ENCODE measurements at regions of chr5 and their contacts with region 1.

Region 1: DNA sequence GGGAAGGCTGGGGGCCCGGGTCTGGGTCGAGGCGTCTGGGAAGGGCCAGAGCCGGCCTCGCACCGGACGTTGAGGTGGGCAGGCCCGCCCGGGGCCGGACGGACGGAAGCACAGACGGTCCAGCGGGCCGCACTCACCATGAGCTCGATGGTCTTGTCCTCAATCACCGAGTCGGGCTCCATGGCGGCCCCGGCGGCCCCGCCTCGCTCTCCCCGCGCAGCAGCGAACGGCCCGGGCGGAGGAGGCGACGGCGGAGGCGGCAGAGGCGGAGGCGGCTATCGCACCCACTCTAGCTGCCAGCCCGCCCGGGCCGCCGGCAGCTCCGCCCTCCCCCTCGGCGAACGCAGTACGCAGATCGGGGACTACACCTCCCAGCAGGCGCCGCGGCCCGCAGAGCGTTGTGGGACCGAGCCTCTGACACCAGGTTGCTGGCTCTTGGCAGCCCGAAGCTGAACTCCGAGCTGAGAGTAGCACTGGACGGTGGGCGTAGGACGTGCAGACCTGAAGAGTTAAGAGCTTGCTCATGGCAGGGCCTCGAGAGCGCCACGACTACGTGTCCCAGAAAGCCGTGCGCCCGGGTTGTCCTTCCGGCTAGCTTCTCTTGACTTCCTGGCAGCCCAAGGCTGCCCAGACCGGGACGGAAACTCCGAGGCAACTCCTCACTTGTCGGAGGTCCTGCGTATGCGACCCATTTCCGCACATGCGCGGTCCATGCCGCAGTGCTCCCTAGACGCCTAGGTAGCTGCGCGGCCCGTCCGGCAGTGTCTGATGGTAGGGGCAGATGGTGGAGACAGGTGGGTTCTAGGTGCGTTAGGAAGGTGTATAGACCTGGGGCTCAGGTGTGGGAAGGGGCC is at the start of gene FBXW11:
- DNase-seq: peak; percentile 85 to 96 (median 92)
- ATAC-seq: peak; percentile 94
- H3K4me3 ChIP-seq: peak within 1 kb of the TSS; percentile 89
- H3K4me3 Mint-ChIP-seq: peak within 1 kb of the TSS; percentile 93 to 99 (median 97)
- H3K27ac ChIP-seq: peak within 1 kb of the TSS; percentile 91
- H3K27ac Mint-ChIP-seq: peak within 1 kb of the TSS; percentile 94 to 100 (median 98)
- H3K4me1 ChIP-seq: peaks cover 33 to 36% of the 10 kb centered on the region in 2 donors
- H3K4me1 Mint-ChIP-seq: peaks cover 34 to 67% (median 56%) of the 10 kb centered on the region in 7 donors
- H3K27me3 ChIP-seq: no peaks in the 10 kb centered on the region
- H3K27me3 Mint-ChIP-seq: no peaks in the 10 kb centered on the region
- total RNA-seq, gene FBXW11: 29.1 to 40.7 (median 33.6) TPM

Region 2: DNA sequence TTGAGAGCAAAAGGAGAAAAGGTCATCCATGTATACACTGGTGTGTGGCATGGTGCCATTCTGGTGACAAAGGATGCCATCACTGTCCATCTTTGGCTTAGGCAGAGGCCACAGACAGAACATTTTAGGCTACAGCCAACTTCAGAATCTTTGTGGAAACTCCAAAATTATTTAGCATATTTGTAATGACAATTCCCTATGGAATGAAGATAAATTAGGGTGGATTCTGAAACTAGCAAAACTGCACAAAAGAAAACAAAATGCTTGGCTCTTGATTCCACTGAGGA is 92.6 kb before region 1 on chr5:
- CTCF ChIA-PET with region 1: interaction called, 11 read pairs
- POLR2A ChIA-PET with region 1: interaction called, 5 read pairs
- intact Hi-C with region 1: loop called (anchors 1 to 2 kb)
- DNase-seq: no peak
- ATAC-seq: no peak
- H3K4me3 ChIP-seq: no peak overlapping the region
- H3K4me3 Mint-ChIP-seq: peak overlapping the region in 1 of 10 donors; percentile 2
- H3K27ac ChIP-seq: no peak overlapping the region
- H3K27ac Mint-ChIP-seq: peak overlapping the region; percentile 12 to 88 (median 73)
- H3K4me1 ChIP-seq: peaks cover 4 to 12% of the 10 kb centered on the region in 2 donors
- H3K4me1 Mint-ChIP-seq: peaks cover 25 to 59% (median 53%) of the 10 kb centered on the region in 7 donors
- H3K27me3 ChIP-seq: no peaks in the 10 kb centered on the region
- H3K27me3 Mint-ChIP-seq: no peaks in the 10 kb centered on the region

Region 3: DNA sequence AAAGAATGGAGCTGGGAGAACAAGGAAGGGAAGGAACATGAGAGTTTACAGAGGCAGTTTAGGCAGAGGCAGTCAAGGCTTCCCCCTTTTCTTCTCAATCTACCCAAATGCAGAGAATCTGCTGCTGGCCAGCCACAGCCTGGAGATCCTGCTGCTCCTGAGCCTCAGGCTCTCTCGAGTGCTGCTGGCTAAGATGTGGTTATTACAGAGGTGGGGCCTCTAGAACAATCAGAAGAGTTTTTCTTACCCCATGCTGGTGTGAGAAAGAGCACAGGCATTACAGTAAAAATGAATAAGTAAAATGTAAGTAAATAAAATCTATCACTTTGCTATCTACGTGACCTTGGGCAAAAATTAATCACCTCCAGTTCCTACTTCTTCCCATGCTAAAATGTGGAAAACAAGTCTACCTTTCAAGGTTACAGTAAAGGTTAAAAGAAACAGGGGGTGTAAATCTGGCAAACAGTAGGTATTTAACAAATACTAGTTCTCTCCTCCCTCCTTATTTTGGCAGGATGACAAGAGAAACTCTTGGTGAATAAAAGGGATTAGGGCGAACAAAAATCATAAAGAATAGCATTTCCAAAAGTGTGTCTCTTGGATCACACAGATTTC is 31.2 kb before region 1 on chr5:
- CTCF ChIA-PET with region 1: no interaction called
- POLR2A ChIA-PET with region 1: no interaction called
- intact Hi-C with region 1: no loop called
- DNase-seq: no peak
- ATAC-seq: no peak
- H3K4me3 ChIP-seq: no peak overlapping the region
- H3K4me3 Mint-ChIP-seq: peak overlapping the region in 6 of 10 donors; percentile 23 to 65 (median 44)
- H3K27ac ChIP-seq: no peak overlapping the region
- H3K27ac Mint-ChIP-seq: peak overlapping the region in 4 of 9 donors; percentile 8 to 71 (median 30)
- H3K4me1 ChIP-seq: peaks cover 0 to 11% of the 10 kb centered on the region in 2 donors
- H3K4me1 Mint-ChIP-seq: peaks cover 24 to 71% (median 67%) of the 10 kb centered on the region in 7 donors
- H3K27me3 ChIP-seq: no peaks in the 10 kb centered on the region
- H3K27me3 Mint-ChIP-seq: no peaks in the 10 kb centered on the region

Region 4: GRCh38 chr5:172044631-172045314 is 38.2 kb after region 1 on chr5:
- CTCF ChIA-PET with region 1: interaction called, 7 read pairs
- POLR2A ChIA-PET with region 1: interaction called, 3 read pairs
- intact Hi-C with region 1: loop called (anchors 1 to 5 kb)
- DNase-seq: no peak
- ATAC-seq: no peak
- H3K4me3 ChIP-seq: no peak overlapping the region
- H3K4me3 Mint-ChIP-seq: no peak overlapping the region
- H3K27ac ChIP-seq: no peak overlapping the region
- H3K27ac Mint-ChIP-seq: peak overlapping the region in 7 of 9 donors; percentile 36 to 90 (median 55)
- H3K4me1 ChIP-seq: no peaks in the 10 kb centered on the region
- H3K4me1 Mint-ChIP-seq: peaks cover 7 to 22% (median 15%) of the 10 kb centered on the region in 7 donors
- H3K27me3 ChIP-seq: no peaks in the 10 kb centered on the region
- H3K27me3 Mint-ChIP-seq: no peaks in the 10 kb centered on the region

Region 5: GRCh38 chr5:172173831-172174153 is 167.2 kb after region 1 on chr5:
- CTCF ChIA-PET with region 1: interaction called, 5 read pairs
- POLR2A ChIA-PET with region 1: interaction called, 39 read pairs
- intact Hi-C with region 1: loop called (anchors 1 kb)
- DNase-seq: peak in 6 of 9 donors; percentile 19 to 79 (median 28)
- ATAC-seq: peak; percentile 32
- H3K4me3 ChIP-seq: peak overlapping the region; percentile 58
- H3K4me3 Mint-ChIP-seq: peak overlapping the region; percentile 87 to 99 (median 94)
- H3K27ac ChIP-seq: peak overlapping the region; percentile 92
- H3K27ac Mint-ChIP-seq: peak overlapping the region; percentile 94 to 100 (median 98)
- H3K4me1 ChIP-seq: peaks cover 77 to 83% of the 10 kb centered on the region in 2 donors
- H3K4me1 Mint-ChIP-seq: peaks cover 76 to 99% (median 93%) of the 10 kb centered on the region in 7 donors
- H3K27me3 ChIP-seq: no peaks in the 10 kb centered on the region
- H3K27me3 Mint-ChIP-seq: no peaks in the 10 kb centered on the region

Region 6: GRCh38 chr5:172347496-172348052 is 341.0 kb after region 1 on chr5:
- CTCF ChIA-PET with region 1: no interaction called
- POLR2A ChIA-PET with region 1: no interaction called
- intact Hi-C with region 1: no loop called
- DNase-seq: no peak
- ATAC-seq: no peak
- H3K4me3 ChIP-seq: no peak overlapping the region
- H3K4me3 Mint-ChIP-seq: no peak overlapping the region
- H3K27ac ChIP-seq: no peak overlapping the region
- H3K27ac Mint-ChIP-seq: no peak overlapping the region
- H3K4me1 ChIP-seq: no peaks in the 10 kb centered on the region
- H3K4me1 Mint-ChIP-seq: peaks cover 0 to 5% (median 0%) of the 10 kb centered on the region in 7 donors
- H3K27me3 ChIP-seq: no peaks in the 10 kb centered on the region
- H3K27me3 Mint-ChIP-seq: peaks cover 0 to 5% (median 0%) of the 10 kb centered on the region in 5 donors

Region 7: DNA sequence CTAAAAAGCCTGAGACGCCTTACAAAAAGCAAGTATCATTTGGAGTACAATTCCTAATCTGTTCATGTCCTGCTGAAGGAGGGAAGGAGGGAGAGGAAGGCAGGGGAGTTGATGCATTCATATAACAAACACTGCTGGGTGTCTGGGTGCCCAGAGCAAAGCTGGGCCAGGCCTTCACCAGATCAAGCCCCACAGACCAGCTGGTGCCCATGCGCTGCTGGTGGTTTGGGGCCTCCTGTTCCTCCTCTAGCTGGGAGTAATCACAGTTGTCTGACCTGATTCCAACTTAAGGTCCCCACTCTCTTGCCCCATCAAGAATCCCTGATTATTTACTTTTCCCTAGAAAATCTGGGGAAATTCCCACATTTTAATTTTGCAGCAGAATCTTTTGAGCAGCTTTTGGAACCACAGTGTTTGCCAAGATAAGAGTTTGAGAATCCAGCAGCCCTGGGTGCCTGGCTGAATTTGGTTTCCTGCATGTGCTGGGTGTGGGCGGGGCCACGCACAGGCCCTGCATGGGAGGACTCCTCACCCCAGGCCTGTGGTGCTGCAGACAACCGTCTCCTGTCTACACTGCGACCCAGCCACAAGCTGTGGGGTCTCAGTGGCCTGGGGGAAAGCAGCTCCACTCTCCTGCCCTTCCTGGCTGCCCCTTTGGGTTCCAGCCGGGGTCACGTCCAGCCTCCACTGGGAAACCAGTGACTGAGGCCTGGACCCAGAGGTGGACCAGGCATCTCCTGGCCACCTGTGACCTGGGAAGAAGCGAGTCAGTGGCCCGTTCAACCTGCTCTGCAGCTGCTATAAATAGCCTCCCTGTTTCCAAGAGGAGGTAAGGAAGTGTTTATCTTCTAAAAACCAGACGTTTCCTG is 682.0 kb after region 1 on chr5:
- CTCF ChIA-PET with region 1: no interaction called
- POLR2A ChIA-PET with region 1: no interaction called
- intact Hi-C with region 1: loop called in 1 of 2 experiments (anchors 10 kb)
- DNase-seq: peak in 8 of 9 donors; percentile 38 to 62 (median 48)
- ATAC-seq: peak; percentile 68
- H3K4me3 ChIP-seq: no peak overlapping the region
- H3K4me3 Mint-ChIP-seq: peak overlapping the region in 3 of 10 donors; percentile 3 to 41 (median 17)
- H3K27ac ChIP-seq: peak overlapping the region; percentile 64
- H3K27ac Mint-ChIP-seq: peak overlapping the region; percentile 73 to 91 (median 85)
- H3K4me1 ChIP-seq: peaks cover 0 to 14% of the 10 kb centered on the region in 2 donors
- H3K4me1 Mint-ChIP-seq: peaks cover 9 to 21% (median 16%) of the 10 kb centered on the region in 7 donors
- H3K27me3 ChIP-seq: no peaks in the 10 kb centered on the region
- H3K27me3 Mint-ChIP-seq: peaks cover 0 to 9% (median 0%) of the 10 kb centered on the region in 5 donors

Region 8: DNA sequence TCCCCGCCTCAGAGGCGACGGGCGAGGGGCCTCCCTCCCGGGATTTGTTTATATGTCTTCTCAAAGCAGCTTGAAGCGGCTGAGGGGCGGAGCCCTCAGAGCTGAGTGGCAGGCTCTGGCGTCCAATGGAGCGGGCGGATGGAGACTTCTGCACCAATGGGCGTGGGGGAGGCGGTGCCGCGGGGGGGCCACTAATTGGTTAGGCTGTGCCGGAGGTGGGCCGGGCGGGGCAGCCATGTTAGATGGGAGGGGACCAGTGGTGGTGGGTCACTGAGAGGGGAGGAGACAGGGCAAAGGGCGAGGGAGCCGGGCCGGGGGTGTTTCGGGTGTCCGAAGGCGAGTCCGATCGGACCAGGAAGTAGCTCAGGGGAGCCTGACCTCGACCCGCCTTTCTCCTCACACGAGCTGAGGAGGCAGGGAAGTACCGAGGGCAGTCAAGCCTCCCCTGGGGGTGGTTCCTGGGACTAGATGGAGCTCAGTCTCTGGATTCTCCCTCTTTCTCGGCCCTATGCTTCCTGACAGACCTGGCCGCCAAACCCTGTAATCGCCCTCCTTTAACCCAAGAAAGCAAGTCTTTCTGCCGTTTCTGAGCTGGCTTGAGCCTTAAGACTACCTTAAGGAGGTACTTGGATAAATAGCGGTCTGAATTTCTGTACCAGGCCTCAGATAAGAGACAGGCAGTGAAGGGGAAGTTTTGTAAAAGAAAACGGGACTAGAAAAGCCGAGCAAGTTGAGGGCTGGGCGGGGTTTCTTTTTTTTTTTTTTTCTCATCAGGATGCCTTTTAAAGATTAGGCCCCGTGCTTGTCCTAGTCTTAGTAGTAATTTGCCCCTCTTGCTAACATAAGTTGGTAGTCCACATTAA is 1050.7 kb after region 1 on chr5:
- CTCF ChIA-PET with region 1: no interaction called
- POLR2A ChIA-PET with region 1: interaction called, 3 read pairs
- intact Hi-C with region 1: loop called in 1 of 2 experiments (anchors 1 kb)
- DNase-seq: peak; percentile 96 to 99 (median 98)
- ATAC-seq: peak; percentile 90
- H3K4me3 ChIP-seq: peak overlapping the region; percentile 96
- H3K4me3 Mint-ChIP-seq: peak overlapping the region; percentile 91 to 97 (median 94)
- H3K27ac ChIP-seq: peak overlapping the region; percentile 97
- H3K27ac Mint-ChIP-seq: peak overlapping the region; percentile 90 to 96 (median 94)
- H3K4me1 ChIP-seq: peaks cover 22 to 33% of the 10 kb centered on the region in 2 donors
- H3K4me1 Mint-ChIP-seq: peaks cover 21 to 72% (median 59%) of the 10 kb centered on the region in 7 donors
- H3K27me3 ChIP-seq: peaks cover 0 to 5% of the 10 kb centered on the region in 2 donors
- H3K27me3 Mint-ChIP-seq: no peaks in the 10 kb centered on the region